ENCODE measurements at regions of chr3 and their contacts with region 1.

Region 1: DNA sequence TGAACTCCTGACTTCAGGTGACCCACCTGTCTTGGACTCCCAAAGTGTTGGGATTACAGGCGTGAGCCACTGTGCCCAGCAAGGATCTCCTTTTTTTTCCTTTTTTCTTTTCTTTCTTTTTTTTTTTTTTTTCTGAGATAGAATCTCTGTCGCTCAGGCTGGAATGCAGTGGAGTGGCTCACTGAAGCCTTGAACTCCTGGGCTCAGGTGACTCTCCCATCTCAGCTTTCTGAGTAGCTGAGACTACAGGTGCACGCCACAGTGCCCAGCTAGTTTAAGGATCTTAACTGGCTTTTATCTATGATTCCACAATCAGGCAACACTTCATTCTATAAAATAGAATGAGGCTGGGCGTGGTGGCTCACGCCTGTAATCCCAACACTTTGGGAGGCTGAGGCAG is 16.3 kb upstream of the NICN1 start:
- ATAC-seq: no peak
- H3K4me3 ChIP-seq: no peak overlapping the region
- H3K27ac ChIP-seq: no peak overlapping the region
- H3K4me1 ChIP-seq: peaks cover 0 to 2% of the 10 kb centered on the region in 2 donors

Region 2: DNA sequence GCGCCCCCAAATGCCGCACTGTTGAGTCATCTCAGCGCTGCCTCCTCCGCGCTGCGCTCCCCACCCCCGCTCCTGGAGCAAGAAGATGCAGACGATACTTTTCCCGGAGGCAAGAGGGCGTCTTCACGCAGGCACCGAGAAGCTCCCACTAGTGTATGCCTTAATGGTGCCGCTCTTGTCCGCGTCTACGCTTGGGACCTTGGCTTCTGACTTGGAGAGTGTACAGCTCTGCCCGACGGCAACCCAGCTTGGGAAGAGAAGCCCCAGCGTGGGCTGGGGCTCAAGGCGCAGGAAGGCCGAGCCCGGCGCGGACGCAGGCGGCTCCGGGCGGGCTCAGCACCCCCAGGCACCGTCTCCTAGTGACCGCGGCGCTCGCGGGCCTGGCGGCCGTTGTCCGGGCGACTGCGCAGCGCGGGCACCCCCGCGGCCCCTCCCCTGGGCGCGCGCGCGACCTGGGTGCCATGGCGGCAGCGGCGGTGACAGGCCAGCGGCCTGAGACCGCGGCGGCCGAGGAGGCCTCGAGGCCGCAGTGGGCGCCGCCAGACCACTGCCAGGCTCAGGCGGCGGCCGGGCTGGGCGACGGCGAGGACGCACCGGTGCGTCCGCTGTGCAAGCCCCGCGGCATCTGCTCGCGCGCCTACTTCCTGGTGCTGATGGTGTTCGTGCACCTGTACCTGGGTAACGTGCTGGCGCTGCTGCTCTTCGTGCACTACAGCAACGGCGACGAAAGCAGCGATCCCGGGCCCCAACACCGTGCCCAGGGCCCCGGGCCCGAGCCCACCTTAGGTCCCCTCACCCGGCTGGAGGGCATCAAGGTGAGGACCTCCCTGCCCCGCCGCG is 455.4 kb before region 1 on chr3 and contains the start of gene P4HTM:
- in situ Hi-C with region 1: loop called in 2 of 9 experiments (anchors 10 to 25 kb)
- ATAC-seq: peak; percentile 75 to 88 (median 86)
- H3K4me3 ChIP-seq: peak within 1 kb of the TSS; percentile 50 to 90 (median 57)
- H3K27ac ChIP-seq: peak within 1 kb of the TSS; percentile 83 to 87
- H3K4me1 ChIP-seq: peaks cover 17 to 22% of the 10 kb centered on the region in 2 donors
- total RNA-seq, gene P4HTM: 4.9 to 94.0 (median 29.6) TPM

Region 3: DNA sequence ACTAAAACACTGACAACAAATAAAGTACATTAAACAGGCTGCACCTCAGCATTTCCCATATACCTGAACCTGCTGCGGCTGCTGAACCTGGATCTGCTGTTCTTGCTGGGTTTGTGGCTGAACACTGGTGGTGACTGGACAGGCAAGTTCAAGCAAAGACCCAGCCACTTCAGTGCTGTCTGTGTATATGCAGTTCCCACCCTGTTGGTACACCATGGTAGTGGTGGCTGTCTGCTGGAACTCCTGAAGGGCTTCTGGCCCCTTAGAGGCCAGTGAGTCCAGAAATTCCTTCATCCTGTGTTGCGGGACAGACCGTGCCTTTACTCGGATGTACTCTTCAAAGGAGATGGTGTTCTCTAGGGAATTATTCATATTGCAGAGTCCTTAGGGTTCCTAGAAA is 368.7 kb before region 1 on chr3:
- in situ Hi-C with region 1: no loop called
- ATAC-seq: peak in 2 of 8 experiments; percentile 40 to 68
- H3K4me3 ChIP-seq: no peak overlapping the region
- H3K27ac ChIP-seq: no peak overlapping the region
- H3K4me1 ChIP-seq: no peaks in the 10 kb centered on the region

Region 4: GRCh38 chr3:49626101-49626581 is 180.8 kb after region 1 on chr3:
- in situ Hi-C with region 1: no loop called
- ATAC-seq: no peak
- H3K4me3 ChIP-seq: no peak overlapping the region
- H3K27ac ChIP-seq: no peak overlapping the region
- H3K4me1 ChIP-seq: no peaks in the 10 kb centered on the region

Measured in motor neuron (in vitro differentiated cells).